B cell (primary cell): ENCODE measurements at regions of chr1 and their contacts with region 1.

Region 1: DNA sequence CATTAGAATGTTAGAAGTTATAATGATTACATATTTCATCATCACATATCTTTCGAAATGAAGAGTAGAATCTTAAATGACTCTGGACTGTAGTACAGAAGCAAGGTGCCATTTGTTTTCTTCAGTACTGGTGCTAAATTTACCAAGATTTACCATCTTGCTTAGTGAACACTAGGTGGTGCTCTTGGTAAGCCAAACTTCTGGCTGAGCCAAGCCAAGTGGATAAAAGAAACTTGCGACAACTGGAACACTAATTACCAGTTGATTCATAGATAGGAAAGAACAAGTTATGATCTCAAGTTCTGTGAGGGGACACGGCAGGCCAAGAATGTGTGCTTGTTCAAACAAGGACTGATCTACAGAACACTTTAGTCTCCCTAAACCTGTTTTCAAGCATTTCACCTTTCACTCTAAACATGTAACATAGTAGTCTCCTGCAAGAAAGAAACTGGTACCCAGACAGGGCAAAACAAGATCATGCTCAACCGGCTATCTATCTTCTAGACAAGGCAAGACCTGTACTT is 19.8 kb downstream of the SPRTN start:
- DNase-seq: peak; percentile 71
- ATAC-seq: peak; percentile 83
- H3K4me3 ChIP-seq: no peak overlapping the region
- H3K4me3 Mint-ChIP-seq: no peak overlapping the region
- H3K27ac ChIP-seq: no peak overlapping the region
- H3K27ac Mint-ChIP-seq: peak overlapping the region; percentile 32
- H3K4me1 ChIP-seq: peaks cover 0 to 3% of the 10 kb centered on the region in 2 donors
- H3K4me1 Mint-ChIP-seq: peaks cover 8% of the 10 kb centered on the region
- H3K27me3 ChIP-seq: no peaks in the 10 kb centered on the region
- H3K27me3 Mint-ChIP-seq: no peaks in the 10 kb centered on the region
- CTCF ChIP-seq: peak; percentile 88

Region 2: DNA sequence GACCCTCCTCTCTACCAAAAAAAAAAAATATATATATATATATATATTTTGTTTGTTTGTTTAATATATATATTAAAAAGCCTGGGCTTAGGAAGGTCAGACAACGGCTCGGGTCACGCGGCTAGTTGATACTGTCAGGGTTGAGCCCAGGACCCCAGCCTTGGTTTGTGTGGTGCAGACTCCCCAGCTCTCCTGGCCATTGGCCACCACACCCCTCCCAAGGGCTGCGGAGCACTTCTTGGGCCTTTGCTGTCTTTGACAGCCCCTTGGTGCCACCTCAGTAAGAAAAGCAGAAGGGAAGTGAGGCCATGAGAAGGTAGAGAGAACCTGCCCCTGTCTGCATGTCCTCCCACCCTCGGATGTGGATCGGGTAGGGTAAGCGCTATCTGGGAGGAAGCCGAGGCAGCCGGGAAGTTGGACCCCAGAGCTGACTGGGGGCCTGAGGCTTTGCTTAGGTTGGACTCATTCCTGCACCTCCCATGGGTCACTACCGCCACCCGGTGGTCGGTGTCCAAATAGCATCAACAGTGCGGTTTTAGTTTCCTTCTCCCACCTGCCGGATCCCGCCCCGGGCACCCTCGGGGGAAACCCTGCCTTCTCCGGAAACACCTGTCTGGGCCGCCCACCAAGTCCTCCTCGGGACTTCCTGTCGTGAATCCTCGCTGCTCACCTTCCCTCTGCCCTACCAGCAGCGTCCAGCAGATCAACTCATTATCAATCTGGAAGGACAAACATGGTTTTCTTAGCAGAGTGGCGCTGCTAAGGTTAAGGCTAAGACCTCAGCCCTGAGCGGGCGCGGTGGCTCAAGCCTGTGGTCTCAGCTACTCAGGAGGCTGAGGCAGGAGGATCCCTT is 146.7 kb before region 1 on chr1:
- CTCF ChIA-PET with region 1: no interaction called
- POLR2A ChIA-PET with region 1: no interaction called
- intact Hi-C with region 1: no loop called
- DNase-seq: peak; percentile 94
- ATAC-seq: peak; percentile 93
- H3K4me3 ChIP-seq: peak overlapping the region; percentile 21 to 67 (median 37)
- H3K4me3 Mint-ChIP-seq: peak overlapping the region; percentile 88
- H3K27ac ChIP-seq: peak overlapping the region; percentile 59 to 65
- H3K27ac Mint-ChIP-seq: peak overlapping the region; percentile 88
- H3K4me1 ChIP-seq: peaks cover 22 to 29% of the 10 kb centered on the region in 2 donors
- H3K4me1 Mint-ChIP-seq: peaks cover 31% of the 10 kb centered on the region
- H3K27me3 ChIP-seq: no peaks in the 10 kb centered on the region
- H3K27me3 Mint-ChIP-seq: no peaks in the 10 kb centered on the region
- CTCF ChIP-seq: peak; percentile 93

Region 3: DNA sequence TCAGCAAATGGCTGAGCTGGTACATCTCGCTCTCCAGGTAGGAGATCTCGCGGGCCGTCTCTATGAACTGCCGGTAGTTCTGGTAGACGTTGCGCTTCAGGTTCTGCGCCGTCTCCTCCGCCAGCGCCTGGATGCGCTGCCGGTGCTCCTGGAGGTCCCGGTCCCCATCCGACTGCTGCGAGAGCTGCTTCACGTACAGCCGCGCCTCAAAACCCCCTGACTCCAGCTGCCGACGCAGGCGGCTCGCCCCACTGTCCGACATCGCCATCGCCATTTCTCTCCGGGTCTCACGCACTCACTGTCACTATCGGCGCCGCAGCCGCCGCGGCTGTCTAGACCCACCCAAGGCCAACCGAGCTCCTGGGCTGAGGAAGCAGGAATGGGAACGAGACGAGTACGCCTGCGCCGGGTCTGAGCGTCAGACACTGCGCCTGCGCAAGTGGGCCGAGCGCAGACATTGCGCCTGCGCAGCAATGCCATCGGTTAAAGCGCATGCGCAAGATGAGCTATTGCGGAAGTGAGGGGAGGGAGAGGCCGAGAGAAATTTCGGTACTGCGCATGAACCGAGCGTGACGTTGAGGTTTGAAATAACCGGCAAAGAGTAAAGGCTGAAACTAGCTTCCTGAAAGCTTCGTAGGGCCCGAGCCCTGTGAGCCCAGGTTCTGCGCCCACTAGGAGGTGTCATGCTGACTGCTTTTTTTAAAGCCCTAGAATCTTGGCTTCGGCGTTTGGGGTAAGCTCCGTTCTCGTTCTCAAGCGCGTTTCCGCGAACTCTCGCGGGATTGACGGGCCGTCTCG is 20.2 kb before region 1 on chr1 and contains the start of gene EXOC8:
- CTCF ChIA-PET with region 1: interaction called, 8 read pairs
- POLR2A ChIA-PET with region 1: no interaction called
- intact Hi-C with region 1: loop called (anchors 1 kb)
- DNase-seq: peak; percentile 99
- ATAC-seq: peak; percentile 83
- H3K4me3 ChIP-seq: peak within 1 kb of the TSS; percentile 68 to 96 (median 94)
- H3K4me3 Mint-ChIP-seq: peak within 1 kb of the TSS; percentile 99
- H3K27ac ChIP-seq: peak within 1 kb of the TSS; percentile 93 to 99
- H3K27ac Mint-ChIP-seq: peak within 1 kb of the TSS; percentile 100
- H3K4me1 ChIP-seq: peaks cover 46 to 54% of the 10 kb centered on the region in 2 donors
- H3K4me1 Mint-ChIP-seq: peaks cover 59% of the 10 kb centered on the region
- H3K27me3 ChIP-seq: no peaks in the 10 kb centered on the region
- H3K27me3 Mint-ChIP-seq: peaks cover 3% of the 10 kb centered on the region
- CTCF ChIP-seq: no peak
- total RNA-seq, gene EXOC8: 32.5 and 32.6 TPM in 2 replicates

Region 4: GRCh38 chr1:231550448-231550781 is 192.5 kb after region 1 on chr1:
- CTCF ChIA-PET with region 1: interaction called, 6 read pairs
- POLR2A ChIA-PET with region 1: no interaction called
- intact Hi-C with region 1: loop called (anchors 5 kb)
- DNase-seq: peak; percentile 39
- ATAC-seq: no peak
- H3K4me3 ChIP-seq: no peak overlapping the region
- H3K4me3 Mint-ChIP-seq: no peak overlapping the region
- H3K27ac ChIP-seq: no peak overlapping the region
- H3K27ac Mint-ChIP-seq: no peak overlapping the region
- H3K4me1 ChIP-seq: no peaks in the 10 kb centered on the region
- H3K4me1 Mint-ChIP-seq: no peaks in the 10 kb centered on the region
- H3K27me3 ChIP-seq: no peaks in the 10 kb centered on the region
- H3K27me3 Mint-ChIP-seq: no peaks in the 10 kb centered on the region
- CTCF ChIP-seq: peak; percentile 37

Region 5: DNA sequence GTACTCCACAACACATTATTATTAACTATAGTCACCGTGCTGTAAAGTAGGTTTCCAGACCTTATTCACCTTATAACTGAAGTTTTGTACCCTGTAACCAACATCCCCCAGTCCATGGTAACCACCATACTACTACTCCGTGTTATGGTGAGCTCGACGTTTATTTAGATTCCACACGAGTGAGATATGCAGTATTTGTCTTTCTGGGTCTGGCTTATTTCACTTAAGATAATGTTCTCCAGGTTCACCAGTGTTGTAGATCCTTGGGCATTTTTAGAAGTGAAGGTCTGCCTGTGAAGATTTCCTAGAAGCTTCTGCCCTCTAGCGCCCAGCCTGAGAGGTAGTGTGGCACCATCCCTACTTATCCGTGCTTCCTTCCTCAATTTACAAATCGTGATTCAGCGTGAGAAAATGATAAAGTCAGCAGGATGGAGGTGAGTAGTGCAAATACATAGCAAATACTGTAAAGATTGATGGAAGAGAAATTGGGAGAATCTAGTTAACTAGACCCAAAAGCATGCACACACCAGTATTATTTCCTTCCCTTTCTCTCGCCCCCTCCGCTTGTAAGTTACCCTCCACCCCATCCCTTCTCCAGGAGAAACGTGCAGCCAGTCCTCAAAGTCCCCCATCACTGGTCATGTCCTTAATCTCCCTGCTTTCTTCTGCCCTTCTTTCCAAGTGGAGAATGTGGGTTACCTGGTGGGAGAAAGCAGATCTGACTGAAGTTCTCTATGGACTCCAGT is 232.7 kb after region 1 on chr1:
- CTCF ChIA-PET with region 1: interaction called, 19 read pairs
- POLR2A ChIA-PET with region 1: no interaction called
- intact Hi-C with region 1: loop called (anchors 1 kb)
- DNase-seq: peak; percentile 59
- ATAC-seq: peak; percentile 28
- H3K4me3 ChIP-seq: no peak overlapping the region
- H3K4me3 Mint-ChIP-seq: no peak overlapping the region
- H3K27ac ChIP-seq: no peak overlapping the region
- H3K27ac Mint-ChIP-seq: no peak overlapping the region
- H3K4me1 ChIP-seq: peaks cover 10 to 12% of the 10 kb centered on the region in 2 donors
- H3K4me1 Mint-ChIP-seq: peaks cover 16% of the 10 kb centered on the region
- H3K27me3 ChIP-seq: no peaks in the 10 kb centered on the region
- H3K27me3 Mint-ChIP-seq: no peaks in the 10 kb centered on the region
- CTCF ChIP-seq: peak; percentile 57

Region 6: GRCh38 chr1:231866392-231867331 is 508.8 kb after region 1 on chr1:
- CTCF ChIA-PET with region 1: interaction called, 3 read pairs
- POLR2A ChIA-PET with region 1: no interaction called
- intact Hi-C with region 1: loop called (anchors 5 kb)
- DNase-seq: peak; percentile 54
- ATAC-seq: no peak
- H3K4me3 ChIP-seq: no peak overlapping the region
- H3K4me3 Mint-ChIP-seq: no peak overlapping the region
- H3K27ac ChIP-seq: no peak overlapping the region
- H3K27ac Mint-ChIP-seq: no peak overlapping the region
- H3K4me1 ChIP-seq: peaks cover 0 to 9% of the 10 kb centered on the region in 2 donors
- H3K4me1 Mint-ChIP-seq: peaks cover 15% of the 10 kb centered on the region
- H3K27me3 ChIP-seq: no peaks in the 10 kb centered on the region
- H3K27me3 Mint-ChIP-seq: no peaks in the 10 kb centered on the region
- CTCF ChIP-seq: peak; percentile 91